ENCODE measurements at regions of chr6 and their contacts with region 1.

Region 1: DNA sequence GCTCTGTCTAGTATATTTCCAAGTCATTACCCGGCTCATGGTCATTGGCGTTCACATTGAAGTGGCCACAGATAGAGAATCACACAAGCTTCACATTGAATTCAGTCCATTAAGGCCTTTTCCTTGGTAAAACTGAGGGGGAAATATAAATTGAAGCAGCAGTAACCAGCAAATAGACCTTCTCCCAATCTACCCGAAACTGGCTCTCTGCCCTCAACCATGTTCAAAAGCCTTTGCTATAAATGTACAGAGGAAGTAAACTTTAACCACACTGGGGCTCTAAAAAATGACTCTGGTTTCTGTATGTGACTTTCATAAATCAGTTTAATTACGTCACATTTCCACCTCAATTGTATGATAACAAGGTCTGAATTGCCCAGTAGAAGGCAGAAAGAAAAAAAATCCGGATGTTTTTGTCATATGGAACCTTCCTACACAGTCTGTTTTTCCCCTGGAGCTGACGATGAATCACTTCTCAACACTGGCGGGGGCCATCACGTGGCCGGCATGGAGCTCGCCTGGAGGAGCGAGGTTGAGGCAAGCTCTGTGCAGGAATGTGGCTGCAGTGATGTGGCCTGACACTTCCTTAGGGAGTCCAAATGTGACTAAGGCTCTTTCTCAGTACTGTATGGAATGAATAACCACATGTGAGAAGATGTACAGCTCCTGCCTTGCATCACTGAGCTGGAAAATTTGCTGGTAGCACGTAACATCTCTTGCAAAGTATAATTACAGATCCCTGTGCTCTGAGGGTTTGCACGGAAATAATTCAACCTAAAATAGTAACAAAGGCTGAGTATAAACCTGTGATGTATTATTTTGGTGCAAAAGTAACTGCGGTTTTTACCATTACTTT is 58.6 kb upstream of the SNX9 start:
- DNase-seq: peak; percentile 94
- H3K4me3 Mint-ChIP-seq: peak overlapping the region; percentile 7
- H3K27ac Mint-ChIP-seq: peak overlapping the region; percentile 91
- H3K4me1 Mint-ChIP-seq: peaks cover 86% of the 10 kb centered on the region
- H3K27me3 Mint-ChIP-seq: no peaks in the 10 kb centered on the region

Region 2: GRCh38 chr6:157535339-157536222 is 228.8 kb before region 1 on chr6:
- CTCF ChIA-PET with region 1: no interaction called
- intact Hi-C with region 1: loop called (anchors 1 kb)
- DNase-seq: peak; percentile 59
- H3K4me3 Mint-ChIP-seq: no peak overlapping the region
- H3K27ac Mint-ChIP-seq: peak overlapping the region; percentile 56
- H3K4me1 Mint-ChIP-seq: peaks cover 24% of the 10 kb centered on the region
- H3K27me3 Mint-ChIP-seq: peaks cover 7% of the 10 kb centered on the region

Region 3: DNA sequence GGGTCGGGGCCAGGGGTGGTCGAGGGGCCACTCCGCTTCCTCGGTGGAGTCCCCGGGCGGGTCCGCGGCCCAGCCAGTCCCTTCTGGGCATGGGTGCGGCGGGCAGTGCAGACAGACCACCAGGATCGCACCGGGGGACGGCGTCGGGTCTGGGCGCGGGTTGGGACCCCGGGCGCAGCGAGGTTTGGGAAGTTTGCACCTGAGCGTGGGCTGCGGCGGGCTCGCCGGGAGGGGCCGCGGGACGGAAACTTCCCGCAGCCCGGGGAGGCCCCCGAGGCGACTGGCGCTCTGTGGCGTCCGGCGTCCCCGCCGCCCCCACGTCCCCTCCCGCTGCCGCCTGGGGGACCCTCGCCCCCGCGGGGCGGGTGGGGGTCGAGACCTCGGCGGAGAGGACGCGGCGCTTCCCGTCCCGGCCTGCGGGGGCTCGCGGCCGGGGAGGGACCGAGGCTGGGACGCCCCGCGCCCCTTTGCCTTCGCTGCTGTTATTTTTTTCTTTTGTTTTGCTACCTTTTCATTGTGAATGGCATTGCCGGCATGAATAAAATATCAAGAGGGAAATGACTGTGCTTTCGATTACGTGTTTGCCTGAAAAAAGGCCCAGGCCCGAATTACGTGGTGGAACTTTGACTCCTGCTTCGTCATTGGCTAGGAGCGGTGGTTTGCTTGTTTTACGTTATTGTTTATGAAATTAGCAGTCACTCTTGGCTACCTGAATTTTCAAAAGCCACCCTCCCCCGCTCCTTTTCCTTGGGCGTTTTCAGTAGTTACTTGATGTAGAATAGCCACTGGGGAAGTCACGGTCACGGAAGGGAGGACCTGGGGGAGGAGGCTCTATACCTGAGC is 59.3 kb after region 1 on chr6:
- CTCF ChIA-PET with region 1: no interaction called
- intact Hi-C with region 1: loop called (anchors 1 kb)
- DNase-seq: peak; percentile 96
- H3K4me3 Mint-ChIP-seq: peak overlapping the region; percentile 80
- H3K27ac Mint-ChIP-seq: peak overlapping the region; percentile 96
- H3K4me1 Mint-ChIP-seq: peaks cover 42% of the 10 kb centered on the region
- H3K27me3 Mint-ChIP-seq: peaks cover 4% of the 10 kb centered on the region

Region 4: GRCh38 chr6:157861814-157862213 is 97.4 kb after region 1 on chr6:
- CTCF ChIA-PET with region 1: interaction called, 3 read pairs
- intact Hi-C with region 1: loop called (anchors 1 kb)
- DNase-seq: no peak
- H3K4me3 Mint-ChIP-seq: no peak overlapping the region
- H3K27ac Mint-ChIP-seq: no peak overlapping the region
- H3K4me1 Mint-ChIP-seq: peaks cover 78% of the 10 kb centered on the region
- H3K27me3 Mint-ChIP-seq: no peaks in the 10 kb centered on the region

Region 5: DNA sequence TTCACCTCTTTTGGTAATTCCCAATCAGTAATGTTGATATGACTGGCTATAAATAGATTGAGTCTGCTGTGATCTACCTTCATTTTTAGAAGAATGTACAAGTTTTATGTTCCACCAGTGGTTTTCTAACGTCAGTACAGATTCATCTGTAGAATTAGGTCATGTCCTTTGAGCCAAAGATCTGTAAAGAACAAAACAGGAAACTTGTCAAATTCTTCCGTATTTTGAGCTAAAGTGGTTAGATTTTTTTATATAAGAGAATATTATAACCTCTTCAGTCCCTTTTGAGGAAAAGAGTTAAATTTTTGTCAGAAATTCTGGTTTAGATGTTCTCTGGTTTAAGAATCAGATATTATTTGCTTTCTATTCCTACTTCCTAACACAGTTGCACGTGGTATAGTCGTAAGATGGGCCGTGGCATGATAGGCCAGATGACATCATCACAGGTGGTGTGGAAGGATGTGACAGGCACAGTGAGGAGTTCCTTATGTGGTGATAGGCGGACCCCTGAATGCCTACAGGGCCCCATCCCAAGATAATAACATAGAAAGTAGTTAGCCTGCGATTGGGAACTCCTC is 120.9 kb after region 1 on chr6:
- CTCF ChIA-PET with region 1: interaction called, 142 read pairs
- intact Hi-C with region 1: loop called (anchors 1 kb)
- DNase-seq: peak; percentile 88
- H3K4me3 Mint-ChIP-seq: peak overlapping the region; percentile 50
- H3K27ac Mint-ChIP-seq: peak overlapping the region; percentile 97
- H3K4me1 Mint-ChIP-seq: peaks cover 79% of the 10 kb centered on the region
- H3K27me3 Mint-ChIP-seq: no peaks in the 10 kb centered on the region

Region 6: DNA sequence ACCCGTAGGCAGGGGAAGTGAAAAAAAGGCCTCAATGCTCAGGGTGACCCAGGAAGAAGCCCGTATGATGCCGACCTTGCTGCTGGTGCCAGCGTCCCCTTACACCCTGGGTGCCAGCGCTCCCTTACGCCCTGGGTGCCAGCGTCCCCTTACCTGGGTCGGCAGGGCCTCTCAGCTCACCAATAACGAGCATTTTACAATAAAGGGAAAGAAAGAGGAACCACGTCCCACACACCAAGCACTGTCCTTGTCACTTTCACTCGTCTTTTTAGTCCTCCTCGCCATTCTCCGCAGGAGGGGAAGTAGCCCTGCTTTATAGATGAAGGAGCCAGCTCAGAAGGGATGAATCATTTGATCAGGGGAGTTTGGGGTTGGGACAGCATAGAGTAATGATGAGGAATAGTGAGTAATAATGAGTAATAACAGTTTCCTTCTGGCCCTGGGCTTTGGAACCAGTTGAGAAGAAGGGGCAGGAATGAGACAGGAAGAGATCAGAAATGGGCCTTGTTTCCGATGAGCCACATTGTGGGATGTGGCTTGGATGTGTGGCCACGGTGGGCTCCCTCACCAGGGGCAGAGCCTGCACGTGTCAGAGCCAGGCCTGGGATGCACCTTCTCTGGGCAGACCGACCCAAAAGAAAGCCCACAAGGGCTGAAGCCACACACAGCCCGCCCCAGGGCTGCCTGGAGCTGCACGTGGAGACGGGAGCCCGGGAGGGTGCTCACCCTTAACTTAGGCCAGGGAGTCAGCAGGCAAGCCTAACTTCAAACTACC is 293.0 kb after region 1 on chr6:
- CTCF ChIA-PET with region 1: no interaction called
- intact Hi-C with region 1: loop called (anchors 5 kb)
- DNase-seq: peak; percentile 77
- H3K4me3 Mint-ChIP-seq: no peak overlapping the region
- H3K27ac Mint-ChIP-seq: peak overlapping the region; percentile 25
- H3K4me1 Mint-ChIP-seq: peaks cover 54% of the 10 kb centered on the region
- H3K27me3 Mint-ChIP-seq: no peaks in the 10 kb centered on the region

Measured in activated naive CD4-positive, alpha-beta T cell treated with anti-CD3 and anti-CD28 coated beads for 36 hours (primary cell).